ENCODE measurements at regions of chr4 and their contacts with region 1.

Region 1: DNA sequence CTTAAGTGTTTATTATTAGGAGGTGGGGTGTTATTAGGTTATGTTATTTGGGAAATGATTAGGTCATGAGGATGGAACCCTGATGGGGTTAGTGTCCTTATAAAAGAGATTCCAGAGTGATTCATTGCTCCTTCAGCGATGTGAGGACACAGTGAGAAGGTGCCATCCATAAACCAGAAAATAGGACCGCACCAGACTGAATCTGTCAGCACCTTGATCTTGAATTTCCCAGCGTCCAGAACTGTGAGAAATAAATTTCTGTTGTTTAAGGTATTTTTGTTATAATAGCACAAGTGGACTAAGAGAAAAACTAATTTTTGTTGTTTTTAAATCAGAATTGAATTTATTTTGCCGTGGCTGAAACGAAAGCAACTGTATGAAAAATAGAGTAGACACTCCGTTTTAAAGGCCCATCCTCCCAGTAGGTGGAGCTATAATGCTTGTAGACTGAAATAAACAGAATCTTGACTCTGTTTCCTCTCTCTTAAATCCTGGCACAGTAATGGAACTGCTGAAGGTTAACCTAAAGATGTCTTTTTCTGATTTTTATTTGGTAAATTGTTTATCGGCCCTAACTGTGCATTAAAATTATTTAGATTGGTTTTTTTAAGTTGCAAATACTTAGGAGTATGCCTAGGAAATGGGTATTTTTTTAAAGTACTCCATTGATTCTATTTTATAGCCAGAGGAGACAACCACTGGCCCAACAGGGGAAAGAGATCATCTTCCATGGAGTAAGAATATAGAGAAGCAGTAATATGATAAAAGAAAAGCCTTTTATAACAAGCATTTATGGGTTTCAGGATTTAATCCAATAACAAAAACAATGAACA is 133.2 kb upstream of the ADAMTS3 start:
- DNase-seq: peak; percentile 39
- H3K4me3 ChIP-seq: peak overlapping the region; percentile 28
- H3K27ac ChIP-seq: no peak overlapping the region
- H3K4me1 ChIP-seq: no peaks in the 10 kb centered on the region
- H3K27me3 ChIP-seq: no peaks in the 10 kb centered on the region
- CTCF ChIP-seq: peak; percentile 54

Region 2: GRCh38 chr4:72342506-72342905 is 359.7 kb before region 1 on chr4:
- CTCF ChIA-PET with region 1: no interaction called
- POLR2A ChIA-PET with region 1: no interaction called
- intact Hi-C with region 1: no loop called
- DNase-seq: no peak
- H3K4me3 ChIP-seq: no peak overlapping the region
- H3K27ac ChIP-seq: no peak overlapping the region
- H3K4me1 ChIP-seq: no peaks in the 10 kb centered on the region
- H3K27me3 ChIP-seq: no peaks in the 10 kb centered on the region
- CTCF ChIP-seq: no peak

Region 3: GRCh38 chr4:72505314-72505744 is 196.9 kb before region 1 on chr4:
- CTCF ChIA-PET with region 1: no interaction called
- POLR2A ChIA-PET with region 1: no interaction called
- intact Hi-C with region 1: loop called (anchors 10 kb)
- DNase-seq: peak; percentile 40
- H3K4me3 ChIP-seq: no peak overlapping the region
- H3K27ac ChIP-seq: no peak overlapping the region
- H3K4me1 ChIP-seq: no peaks in the 10 kb centered on the region
- H3K27me3 ChIP-seq: no peaks in the 10 kb centered on the region
- CTCF ChIP-seq: peak; percentile 58

Region 4: GRCh38 chr4:72712997-72713396 is 10.8 kb after region 1 on chr4:
- CTCF ChIA-PET with region 1: no interaction called
- POLR2A ChIA-PET with region 1: interaction called, 12 read pairs
- intact Hi-C with region 1: no loop called
- DNase-seq: no peak
- H3K4me3 ChIP-seq: no peak overlapping the region
- H3K27ac ChIP-seq: no peak overlapping the region
- H3K4me1 ChIP-seq: no peaks in the 10 kb centered on the region
- H3K27me3 ChIP-seq: no peaks in the 10 kb centered on the region
- CTCF ChIP-seq: no peak

Measured in A673 (cell line).